Activated naive CD4-positive, alpha-beta T cell treated with anti-CD3 and anti-CD28 coated beads for 36 hours (primary cell): ENCODE measurements at regions of chr1 and their contacts with region 1.

Region 1: GRCh38 chr1:201955009-201955728 is at the start of gene TIMM17A:
- DNase-seq: peak; percentile 98
- H3K4me3 Mint-ChIP-seq: peak within 1 kb of the TSS; percentile 96
- H3K27ac Mint-ChIP-seq: peak within 1 kb of the TSS; percentile 92
- H3K4me1 Mint-ChIP-seq: peaks cover 20% of the 10 kb centered on the region
- H3K27me3 Mint-ChIP-seq: no peaks in the 10 kb centered on the region
- total RNA-seq, gene TIMM17A: 52.6 to 54.4 TPM

Region 2: GRCh38 chr1:201206176-201206575 is 749.0 kb before region 1 on chr1:
- CTCF ChIA-PET with region 1: no interaction called
- intact Hi-C with region 1: no loop called
- DNase-seq: no peak
- H3K4me3 Mint-ChIP-seq: no peak overlapping the region
- H3K27ac Mint-ChIP-seq: no peak overlapping the region
- H3K4me1 Mint-ChIP-seq: no peaks in the 10 kb centered on the region
- H3K27me3 Mint-ChIP-seq: peaks cover 4% of the 10 kb centered on the region

Region 3: GRCh38 chr1:201828820-201829774 is 126.1 kb before region 1 on chr1 and contains the start of gene IPO9:
- CTCF ChIA-PET with region 1: interaction called, 3 read pairs
- intact Hi-C with region 1: loop called (anchors 1 kb)
- DNase-seq: peak; percentile 98
- H3K4me3 Mint-ChIP-seq: peak within 1 kb of the TSS; percentile 99
- H3K27ac Mint-ChIP-seq: peak within 1 kb of the TSS; percentile 93
- H3K4me1 Mint-ChIP-seq: peaks cover 45% of the 10 kb centered on the region
- H3K27me3 Mint-ChIP-seq: no peaks in the 10 kb centered on the region
- total RNA-seq, gene IPO9: 63.9 to 65.7 TPM

Region 4: GRCh38 chr1:201982623-201983379 is 27.6 kb after region 1 on chr1 and contains the start of gene RNPEP:
- CTCF ChIA-PET with region 1: no interaction called
- intact Hi-C with region 1: loop called (anchors 1 kb)
- DNase-seq: peak; percentile 57
- H3K4me3 Mint-ChIP-seq: peak within 1 kb of the TSS; percentile 92
- H3K27ac Mint-ChIP-seq: peak within 1 kb of the TSS; percentile 69
- H3K4me1 Mint-ChIP-seq: peaks cover 17% of the 10 kb centered on the region
- H3K27me3 Mint-ChIP-seq: no peaks in the 10 kb centered on the region
- total RNA-seq, gene RNPEP: 43.4 to 44.4 TPM

Region 5: GRCh38 chr1:202235856-202236837 is 281.0 kb after region 1 on chr1:
- CTCF ChIA-PET with region 1: no interaction called
- intact Hi-C with region 1: no loop called
- DNase-seq: peak; percentile 86
- H3K4me3 Mint-ChIP-seq: peak overlapping the region; percentile 16
- H3K27ac Mint-ChIP-seq: no peak overlapping the region
- H3K4me1 Mint-ChIP-seq: peaks cover 3% of the 10 kb centered on the region
- H3K27me3 Mint-ChIP-seq: peaks cover 13% of the 10 kb centered on the region